Gastrocnemius medialis (tissue), 4 donors: ENCODE measurements at regions of chr2 and their contacts with region 1.

Region 1: GRCh38 chr2:100730346-100730745 is 89.6 kb upstream of the NPAS2 start:
- DNase-seq: peak; percentile 14 to 48
- ATAC-seq: peak; percentile 57 to 66
- H3K4me3 ChIP-seq: no peak overlapping the region
- H3K27ac ChIP-seq: no peak overlapping the region
- H3K4me1 ChIP-seq: peaks cover 0 to 3% of the 10 kb centered on the region in 2 donors
- H3K27me3 ChIP-seq: no peaks in the 10 kb centered on the region
- CTCF ChIP-seq: peak; percentile 36 to 62 (median 55)
- POLR2A ChIP-seq: no peak

Region 2: GRCh38 chr2:100813527-100813926 is 83.2 kb after region 1 on chr2:
- in situ Hi-C with region 1: no loop called
- intact Hi-C with region 1: no loop called
- DNase-seq: no peak
- ATAC-seq: peak; percentile 92 to 95
- H3K4me3 ChIP-seq: no peak overlapping the region
- H3K27ac ChIP-seq: peak overlapping the region; percentile 42 to 68 (median 54)
- H3K4me1 ChIP-seq: peaks cover 23 to 34% of the 10 kb centered on the region in 2 donors
- H3K27me3 ChIP-seq: no peaks in the 10 kb centered on the region
- CTCF ChIP-seq: no peak
- POLR2A ChIP-seq: no peak

Region 3: GRCh38 chr2:100992262-100992661 is 261.9 kb after region 1 on chr2:
- in situ Hi-C with region 1: loop called in 1 of 4 experiments (anchors 10 kb)
- intact Hi-C with region 1: no loop called
- DNase-seq: no peak
- ATAC-seq: no peak
- H3K4me3 ChIP-seq: no peak overlapping the region
- H3K27ac ChIP-seq: no peak overlapping the region
- H3K4me1 ChIP-seq: no peaks in the 10 kb centered on the region
- H3K27me3 ChIP-seq: no peaks in the 10 kb centered on the region
- CTCF ChIP-seq: no peak
- POLR2A ChIP-seq: no peak

Region 4: DNA sequence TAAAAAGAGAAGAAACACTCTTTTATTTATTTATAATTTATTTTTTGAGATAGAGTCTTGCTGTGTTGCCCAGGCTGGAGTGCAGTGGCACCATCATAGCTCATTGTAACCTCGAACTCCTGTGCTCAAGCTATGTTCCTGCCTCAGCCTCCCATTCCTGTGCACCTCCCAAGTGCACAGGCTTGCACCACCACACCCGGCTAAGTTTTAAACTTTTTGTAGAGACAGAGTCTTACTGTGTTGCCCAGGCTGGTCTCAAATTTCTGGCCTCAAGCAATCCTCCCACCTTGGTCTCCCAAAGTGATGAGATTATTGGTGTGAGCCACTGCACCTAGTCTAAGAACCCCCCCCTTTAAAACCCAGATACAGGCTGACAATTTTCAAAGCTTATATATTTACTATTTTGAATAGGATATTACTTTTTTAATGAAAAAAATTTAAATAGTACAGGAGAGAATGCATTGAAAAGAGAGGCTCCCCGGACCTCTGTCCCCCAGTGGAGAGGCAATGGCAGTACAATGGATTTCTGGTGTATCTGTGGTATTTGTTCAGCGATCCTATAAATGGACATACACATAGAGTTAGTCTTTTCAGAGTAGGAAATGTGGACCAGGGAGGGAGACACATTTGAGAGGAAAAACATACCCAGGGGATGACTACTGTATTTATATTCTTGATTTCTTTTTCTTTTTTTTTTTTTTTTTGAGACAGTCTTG is 474.2 kb after region 1 on chr2:
- in situ Hi-C with region 1: no loop called
- intact Hi-C with region 1: no loop called
- DNase-seq: no peak
- ATAC-seq: no peak
- H3K4me3 ChIP-seq: no peak overlapping the region
- H3K27ac ChIP-seq: no peak overlapping the region
- H3K4me1 ChIP-seq: peaks cover 0 to 3% of the 10 kb centered on the region in 2 donors
- H3K27me3 ChIP-seq: no peaks in the 10 kb centered on the region
- CTCF ChIP-seq: no peak
- POLR2A ChIP-seq: no peak